Caco-2 (cell line): ENCODE measurements at regions of chr18 and their contacts with region 1.

Region 1: DNA sequence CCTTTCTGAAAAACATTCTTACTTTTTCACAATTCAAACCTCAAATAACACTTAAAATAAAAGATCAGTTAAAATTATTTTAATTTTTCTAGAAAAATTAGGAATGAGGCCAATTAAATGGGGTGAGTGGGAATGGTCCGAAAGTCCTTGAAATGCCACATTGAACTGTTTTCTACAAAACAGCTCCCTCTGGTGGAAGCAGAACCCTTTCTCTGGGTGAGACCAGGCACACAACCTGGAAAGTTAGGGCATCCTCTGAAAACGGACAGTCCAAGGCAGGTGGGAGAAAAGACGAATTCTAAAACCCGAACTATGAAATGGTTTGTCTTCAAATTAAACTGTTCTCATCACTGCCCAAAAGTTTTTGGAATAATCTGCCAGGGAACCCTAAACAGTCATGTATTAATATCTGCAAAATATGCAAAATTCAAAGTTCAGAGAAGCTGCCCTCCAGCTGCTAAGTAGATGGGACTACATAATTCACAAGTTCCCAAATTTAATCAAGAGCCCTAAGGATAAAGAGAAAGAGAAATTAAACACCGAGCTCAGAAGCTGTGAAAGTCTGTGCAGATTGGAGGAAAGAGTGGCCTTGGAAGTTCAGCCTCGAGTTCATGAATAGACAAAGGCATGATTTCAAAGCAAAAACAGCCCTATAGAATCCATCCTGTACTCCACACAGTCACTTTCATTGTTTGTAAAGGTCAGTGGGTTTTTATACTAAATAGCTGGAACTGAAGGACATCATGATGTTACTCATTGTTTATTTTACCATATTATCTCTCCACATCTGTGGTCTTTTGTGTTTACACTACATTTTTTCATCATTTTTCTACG is 108.3 kb downstream of the PIEZO2 start:
- DNase-seq: peak; percentile 51 to 69
- H3K4me3 ChIP-seq: no peak overlapping the region
- H3K4me3 Mint-ChIP-seq: no peak overlapping the region
- H3K27ac Mint-ChIP-seq: no peak overlapping the region
- H3K4me1 ChIP-seq: no peaks in the 10 kb centered on the region
- H3K4me1 Mint-ChIP-seq: no peaks in the 10 kb centered on the region
- H3K27me3 ChIP-seq: no peaks in the 10 kb centered on the region
- H3K27me3 Mint-ChIP-seq: no peaks in the 10 kb centered on the region
- CTCF ChIP-seq: peak; percentile 67 to 81

Region 2: GRCh38 chr18:10787293-10787901 is 253.6 kb before region 1 on chr18:
- CTCF ChIA-PET with region 1: no interaction called
- POLR2A ChIA-PET with region 1: no interaction called
- intact Hi-C with region 1: loop called (anchors 5 kb)
- DNase-seq: peak; percentile 74 to 82
- H3K4me3 ChIP-seq: no peak overlapping the region
- H3K4me3 Mint-ChIP-seq: no peak overlapping the region
- H3K27ac Mint-ChIP-seq: no peak overlapping the region
- H3K4me1 ChIP-seq: no peaks in the 10 kb centered on the region
- H3K4me1 Mint-ChIP-seq: no peaks in the 10 kb centered on the region
- H3K27me3 ChIP-seq: no peaks in the 10 kb centered on the region; the same call in none of the 2 replicates
- H3K27me3 Mint-ChIP-seq: peaks cover 16% of the 10 kb centered on the region
- CTCF ChIP-seq: peak; percentile 74 to 76

Region 3: DNA sequence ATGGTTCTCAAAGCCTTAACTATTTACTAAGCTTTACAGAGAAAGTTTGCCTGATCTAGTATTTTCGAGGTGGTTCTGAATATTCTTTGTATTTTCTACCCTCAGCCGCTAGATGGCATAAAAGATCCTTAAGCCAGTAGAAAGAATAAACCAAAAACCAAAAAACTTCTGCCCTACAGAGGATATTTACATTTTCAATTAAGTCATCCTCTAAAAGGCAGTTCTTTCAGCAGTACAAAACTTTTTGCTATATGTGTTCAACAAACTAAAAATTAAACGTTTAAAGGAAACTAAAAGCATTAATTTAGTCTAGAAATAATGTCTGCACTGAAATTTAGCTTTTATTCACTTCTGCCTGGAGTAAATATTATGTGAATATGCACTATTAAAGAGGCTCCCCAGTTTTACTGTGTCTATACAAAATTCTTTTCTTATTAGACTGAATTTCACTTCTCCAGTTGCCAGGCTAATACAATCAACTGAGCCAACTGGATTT is 189.2 kb before region 1 on chr18:
- CTCF ChIA-PET with region 1: no interaction called
- POLR2A ChIA-PET with region 1: no interaction called
- intact Hi-C with region 1: loop called (anchors 1 kb)
- DNase-seq: peak in 1 of 2 experiments; percentile 52
- H3K4me3 ChIP-seq: no peak overlapping the region
- H3K4me3 Mint-ChIP-seq: no peak overlapping the region
- H3K27ac Mint-ChIP-seq: no peak overlapping the region
- H3K4me1 ChIP-seq: peaks cover 12% of the 10 kb centered on the region
- H3K4me1 Mint-ChIP-seq: no peaks in the 10 kb centered on the region
- H3K27me3 ChIP-seq: no peaks in the 10 kb centered on the region; the same call in 1 of the 2 replicates
- H3K27me3 Mint-ChIP-seq: peaks cover 3% of the 10 kb centered on the region
- CTCF ChIP-seq: peak; percentile 71 to 77

Region 4: GRCh38 chr18:11008505-11008904 is 32.5 kb before region 1 on chr18:
- CTCF ChIA-PET with region 1: no interaction called
- POLR2A ChIA-PET with region 1: no interaction called
- intact Hi-C with region 1: no loop called
- DNase-seq: no peak
- H3K4me3 ChIP-seq: no peak overlapping the region
- H3K4me3 Mint-ChIP-seq: no peak overlapping the region
- H3K27ac Mint-ChIP-seq: no peak overlapping the region
- H3K4me1 ChIP-seq: peaks cover 21% of the 10 kb centered on the region
- H3K4me1 Mint-ChIP-seq: peaks cover 28% of the 10 kb centered on the region
- H3K27me3 ChIP-seq: no peaks in the 10 kb centered on the region
- H3K27me3 Mint-ChIP-seq: no peaks in the 10 kb centered on the region
- CTCF ChIP-seq: no peak